Activated T-helper 1 cell treated with anti-CD3 and anti-CD28 coated beads, Interleukin-12 subunit alpha, Interleukin-12 subunit beta, Interleukin-2, Interleukin-4 antibody, amounts not matched to agents 30 ng/mL and 10 ng/mL and 1 ng/mL, durations not matched to agents 14 hours and 24 hours and 36 hours (primary cell): ENCODE measurements at regions of chr6 and their contacts with region 1.

Region 1: GRCh38 chr6:5302995-5303622 is 41.8 kb downstream of the FARS2 start:
- DNase-seq: peak; percentile 25
- H3K4me3 Mint-ChIP-seq: peak overlapping the region; percentile 5
- H3K27ac Mint-ChIP-seq: no peak overlapping the region
- H3K4me1 Mint-ChIP-seq: peaks cover 22% of the 10 kb centered on the region
- H3K27me3 Mint-ChIP-seq: no peaks in the 10 kb centered on the region

Region 2: DNA sequence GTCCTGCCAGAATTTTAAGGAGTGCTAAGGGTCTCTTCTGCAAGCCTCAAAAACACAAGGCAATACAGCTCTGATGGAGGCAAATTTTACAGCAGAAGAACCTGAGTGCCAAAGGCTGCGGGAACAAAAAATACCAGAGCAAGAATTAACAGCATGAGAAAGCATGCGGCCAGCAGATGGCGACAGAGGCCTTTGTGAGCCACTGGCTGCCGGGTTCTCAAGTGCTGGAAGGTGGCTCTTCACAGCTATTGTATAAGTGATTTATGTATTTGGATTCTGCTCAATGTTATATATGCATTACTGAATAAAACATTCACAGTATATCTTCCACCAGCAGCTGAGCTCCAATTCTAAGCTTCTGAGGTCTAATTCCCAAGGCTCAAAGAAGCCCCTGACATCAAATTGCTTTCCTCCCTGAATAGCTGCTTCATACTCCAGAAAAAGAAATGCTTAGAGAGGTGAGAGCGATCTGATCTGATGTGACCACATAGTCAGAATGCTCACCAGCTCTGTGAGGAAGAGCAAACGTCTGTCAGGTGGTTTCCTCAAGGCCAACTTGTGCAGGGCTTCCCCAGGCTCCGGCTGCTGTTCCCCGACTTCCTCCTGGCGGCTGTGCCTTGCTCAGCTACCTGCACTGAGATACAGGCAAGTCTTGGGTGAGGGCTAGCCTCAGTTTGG is 159.3 kb before region 1 on chr6:
- intact Hi-C with region 1: loop called (anchors 1 kb)
- DNase-seq: peak; percentile 68
- H3K4me3 Mint-ChIP-seq: no peak overlapping the region
- H3K27ac Mint-ChIP-seq: no peak overlapping the region
- H3K4me1 Mint-ChIP-seq: peaks cover 10% of the 10 kb centered on the region
- H3K27me3 Mint-ChIP-seq: no peaks in the 10 kb centered on the region

Region 3: DNA sequence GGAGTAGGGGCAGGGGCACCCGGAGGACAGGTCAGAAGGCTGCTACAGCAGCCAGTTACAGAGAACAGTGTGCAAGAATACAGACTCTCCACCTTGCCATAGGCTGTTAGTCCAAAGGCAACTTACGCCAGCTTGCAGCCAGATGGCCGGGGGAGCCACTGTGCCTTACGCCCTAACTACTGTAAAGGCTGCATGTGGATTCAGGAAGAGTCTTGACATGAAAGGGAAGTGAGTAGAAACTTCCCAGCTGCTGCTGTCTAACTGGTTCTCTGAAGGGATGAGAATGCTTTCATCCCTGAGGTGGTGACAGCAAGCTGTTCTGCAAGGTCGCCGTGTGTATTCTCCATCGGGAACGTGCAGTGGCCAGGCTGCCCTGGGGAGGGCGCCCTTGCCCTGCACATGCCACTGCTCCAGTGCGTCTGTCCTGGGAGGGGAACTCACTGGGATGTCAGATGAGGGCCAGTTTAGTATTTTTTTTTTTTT is 88.5 kb before region 1 on chr6:
- intact Hi-C with region 1: loop called (anchors 1 kb)
- DNase-seq: no peak
- H3K4me3 Mint-ChIP-seq: no peak overlapping the region
- H3K27ac Mint-ChIP-seq: no peak overlapping the region
- H3K4me1 Mint-ChIP-seq: peaks cover 14% of the 10 kb centered on the region
- H3K27me3 Mint-ChIP-seq: no peaks in the 10 kb centered on the region

Region 4: GRCh38 chr6:5279891-5280338 is 23.2 kb before region 1 on chr6:
- intact Hi-C with region 1: loop called (anchors 1 kb)
- DNase-seq: peak; percentile 10
- H3K4me3 Mint-ChIP-seq: peak overlapping the region; percentile 13
- H3K27ac Mint-ChIP-seq: peak overlapping the region; percentile 84
- H3K4me1 Mint-ChIP-seq: peaks cover 49% of the 10 kb centered on the region
- H3K27me3 Mint-ChIP-seq: peaks cover 2% of the 10 kb centered on the region